ENCODE measurements at regions of chr1 and their contacts with region 1.

Region 1: DNA sequence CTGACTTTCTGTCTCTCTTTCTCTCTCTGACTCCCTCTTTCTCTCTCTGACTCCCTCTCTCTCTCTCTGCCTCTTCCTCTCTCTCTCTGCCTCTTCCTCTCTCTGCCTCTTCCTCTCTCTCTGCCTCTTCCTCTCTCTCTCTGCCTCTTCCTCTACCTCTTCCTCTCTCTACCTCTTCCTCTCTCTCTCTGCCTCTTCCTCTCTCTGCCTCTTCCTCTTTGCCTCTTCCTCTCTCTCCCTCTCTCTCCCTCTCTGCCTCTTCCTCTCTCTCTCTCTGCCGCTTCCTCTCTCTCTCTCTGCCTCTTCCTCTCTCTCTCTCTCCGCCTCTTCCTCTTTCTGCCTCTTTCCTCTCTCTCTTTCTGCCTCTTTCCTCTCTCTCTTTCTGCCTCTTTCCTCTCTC is 18.6 kb upstream of the ANKRD45 start:
- DNase-seq: no peak

Region 2: GRCh38 chr1:173639102-173639501 is 49.2 kb before region 1 on chr1:
- intact Hi-C with region 1: loop called in 1 of 2 experiments (anchors 1 kb)
- DNase-seq: no peak

Measured in posterior vena cava (tissue), 2 donors.